ENCODE measurements at regions of chr10 and their contacts with region 1.

Region 1: DNA sequence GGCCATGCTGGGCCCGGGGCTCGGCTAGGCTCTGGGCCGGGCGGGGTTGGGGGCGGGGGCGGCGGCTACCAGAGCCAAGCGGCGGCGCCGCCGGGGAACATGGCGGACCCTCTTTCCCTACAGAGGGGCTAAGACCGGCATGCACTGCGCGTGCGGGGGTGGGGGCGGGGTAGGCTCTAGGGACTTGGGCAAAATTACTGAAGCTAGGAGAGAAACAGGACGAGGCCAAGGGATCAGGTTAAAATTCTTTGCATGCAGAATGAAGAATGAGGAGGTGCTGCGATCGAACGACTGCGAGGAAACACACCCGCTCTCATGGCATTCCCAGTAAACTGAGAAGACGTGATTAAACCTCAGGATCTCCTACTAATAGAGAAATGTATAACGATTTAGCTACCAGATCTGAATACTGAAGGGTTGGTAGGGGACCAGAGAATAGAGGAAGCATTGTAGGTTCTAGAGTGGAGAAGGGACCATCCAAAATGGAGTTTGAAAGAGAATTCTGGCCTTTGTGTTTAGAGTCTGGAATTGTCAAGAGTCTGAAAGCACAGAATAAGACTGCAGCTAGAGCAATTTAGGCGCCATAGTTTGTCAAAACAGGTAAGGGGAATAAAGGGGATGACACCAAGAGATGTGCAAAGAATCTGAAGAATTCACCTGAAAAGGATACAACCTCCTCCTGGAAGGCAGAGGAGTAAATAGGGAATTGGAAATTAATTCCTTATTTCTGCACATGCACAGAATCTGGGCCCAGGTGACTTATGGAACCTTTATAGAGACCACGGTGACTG is at the start of gene PPP3CB:
- DNase-seq: peak in 6 of 9 donors; percentile 77 to 93 (median 84)
- ATAC-seq: peak; percentile 89
- H3K4me3 ChIP-seq: peak within 1 kb of the TSS; percentile 99
- H3K4me3 Mint-ChIP-seq: peak within 1 kb of the TSS; percentile 84 to 99 (median 90)
- H3K27ac ChIP-seq: peak within 1 kb of the TSS; percentile 91
- H3K27ac Mint-ChIP-seq: peak within 1 kb of the TSS; percentile 83 to 99 (median 93)
- H3K4me1 ChIP-seq: peaks cover 19 to 38% of the 10 kb centered on the region in 2 donors
- H3K4me1 Mint-ChIP-seq: peaks cover 44 to 63% (median 55%) of the 10 kb centered on the region in 7 donors
- H3K27me3 ChIP-seq: no peaks in the 10 kb centered on the region
- H3K27me3 Mint-ChIP-seq: no peaks in the 10 kb centered on the region
- total RNA-seq, gene PPP3CB: 25.7 to 44.5 (median 41.4) TPM

Region 2: DNA sequence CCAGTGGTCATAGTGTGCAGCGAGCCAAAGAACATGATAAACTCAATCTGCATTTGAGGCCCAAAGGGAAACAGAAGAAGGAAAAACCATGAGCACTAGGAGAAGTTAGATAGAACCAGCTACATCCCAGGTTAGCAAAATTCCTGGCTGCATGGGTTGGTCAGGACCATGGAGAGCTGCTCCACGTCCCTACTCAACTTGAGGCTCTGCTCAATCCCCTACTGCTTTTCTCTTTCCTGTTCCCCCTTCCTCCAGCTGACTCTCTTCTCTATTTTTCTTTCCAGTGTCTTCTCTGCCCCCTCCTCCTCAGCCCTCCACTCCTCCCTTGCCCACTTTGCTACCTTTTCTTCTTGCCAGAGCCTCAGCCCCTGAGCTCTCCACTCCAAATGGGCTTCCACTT is 1700.8 kb before region 1 on chr10:
- CTCF ChIA-PET with region 1: no interaction called
- POLR2A ChIA-PET with region 1: no interaction called
- intact Hi-C with region 1: no loop called
- DNase-seq: no peak
- ATAC-seq: no peak
- H3K4me3 ChIP-seq: no peak overlapping the region
- H3K4me3 Mint-ChIP-seq: no peak overlapping the region
- H3K27ac ChIP-seq: no peak overlapping the region
- H3K27ac Mint-ChIP-seq: no peak overlapping the region
- H3K4me1 ChIP-seq: no peaks in the 10 kb centered on the region
- H3K4me1 Mint-ChIP-seq: peaks cover 12 to 23% (median 18%) of the 10 kb centered on the region in 7 donors
- H3K27me3 ChIP-seq: no peaks in the 10 kb centered on the region
- H3K27me3 Mint-ChIP-seq: peaks cover 0 to 3% (median 0%) of the 10 kb centered on the region in 5 donors

Region 3: DNA sequence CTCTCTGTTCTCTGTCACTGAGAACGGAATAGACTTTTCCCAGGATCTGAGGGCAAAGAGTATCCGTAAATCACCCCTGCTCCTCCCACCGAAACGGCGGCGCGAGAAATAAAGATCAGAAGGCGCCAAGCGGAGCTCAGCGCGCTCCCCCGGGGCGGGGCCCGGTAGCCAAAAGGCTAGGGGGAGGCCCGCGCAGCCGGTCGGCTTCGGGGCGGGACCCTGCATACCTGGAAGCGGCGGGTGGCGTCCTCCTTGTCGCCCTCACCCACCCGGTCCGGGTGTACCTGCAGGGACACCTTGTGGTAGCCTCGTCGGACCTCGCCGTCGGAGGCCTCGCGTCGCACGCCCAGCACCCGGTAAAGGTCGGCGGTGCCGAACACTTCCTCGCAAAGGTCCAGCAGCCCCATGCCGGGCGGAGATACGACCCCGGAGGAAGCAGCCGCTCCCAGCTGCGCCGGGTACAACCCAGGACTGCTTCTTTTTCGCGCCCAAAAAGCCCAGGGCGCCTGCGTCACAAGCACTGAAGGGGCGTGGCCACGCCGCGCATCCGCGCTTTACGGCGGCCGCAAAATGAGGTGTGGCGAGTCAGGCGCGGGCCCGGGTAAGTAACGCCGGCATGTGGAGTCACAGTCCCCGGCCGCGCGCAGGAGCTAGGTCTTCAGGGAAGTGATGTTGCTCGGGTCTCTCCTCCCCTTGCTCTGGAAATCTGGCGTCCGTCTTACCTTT is 249.1 kb before region 1 on chr10 and contains the start of gene DNAJC9:
- CTCF ChIA-PET with region 1: no interaction called
- POLR2A ChIA-PET with region 1: interaction called, 8 read pairs
- intact Hi-C with region 1: loop called (anchors 1 kb)
- DNase-seq: peak; percentile 93 to 98 (median 96)
- ATAC-seq: peak; percentile 95
- H3K4me3 ChIP-seq: peak within 1 kb of the TSS; percentile 71
- H3K4me3 Mint-ChIP-seq: peak within 1 kb of the TSS; percentile 92 to 100 (median 97)
- H3K27ac ChIP-seq: peak within 1 kb of the TSS; percentile 86
- H3K27ac Mint-ChIP-seq: peak within 1 kb of the TSS; percentile 91 to 98 (median 96)
- H3K4me1 ChIP-seq: peaks cover 27 to 37% of the 10 kb centered on the region in 2 donors
- H3K4me1 Mint-ChIP-seq: peaks cover 30 to 69% (median 55%) of the 10 kb centered on the region in 7 donors
- H3K27me3 ChIP-seq: no peaks in the 10 kb centered on the region
- H3K27me3 Mint-ChIP-seq: no peaks in the 10 kb centered on the region
- total RNA-seq, gene DNAJC9: 14.5 to 47.7 (median 26.8) TPM

Region 4: GRCh38 chr10:73306171-73306708 is 189.8 kb before region 1 on chr10:
- CTCF ChIA-PET with region 1: no interaction called
- POLR2A ChIA-PET with region 1: no interaction called
- intact Hi-C with region 1: no loop called
- DNase-seq: no peak
- ATAC-seq: no peak
- H3K4me3 ChIP-seq: no peak overlapping the region
- H3K4me3 Mint-ChIP-seq: no peak overlapping the region
- H3K27ac ChIP-seq: no peak overlapping the region
- H3K27ac Mint-ChIP-seq: no peak overlapping the region
- H3K4me1 ChIP-seq: no peaks in the 10 kb centered on the region
- H3K4me1 Mint-ChIP-seq: no peaks in the 10 kb centered on the region
- H3K27me3 ChIP-seq: no peaks in the 10 kb centered on the region
- H3K27me3 Mint-ChIP-seq: peaks cover 0 to 15% (median 0%) of the 10 kb centered on the region in 5 donors

Region 5: GRCh38 chr10:73480158-73480557 is 15.9 kb before region 1 on chr10:
- CTCF ChIA-PET with region 1: no interaction called
- POLR2A ChIA-PET with region 1: interaction called, 7 read pairs
- intact Hi-C with region 1: loop called in 1 of 2 experiments (anchors 2 kb)
- DNase-seq: no peak
- ATAC-seq: no peak
- H3K4me3 ChIP-seq: no peak overlapping the region
- H3K4me3 Mint-ChIP-seq: no peak overlapping the region
- H3K27ac ChIP-seq: no peak overlapping the region
- H3K27ac Mint-ChIP-seq: peak overlapping the region in 1 of 9 donors; percentile 18
- H3K4me1 ChIP-seq: peaks cover 0 to 15% of the 10 kb centered on the region in 2 donors
- H3K4me1 Mint-ChIP-seq: peaks cover 1 to 29% (median 17%) of the 10 kb centered on the region in 7 donors
- H3K27me3 ChIP-seq: no peaks in the 10 kb centered on the region
- H3K27me3 Mint-ChIP-seq: no peaks in the 10 kb centered on the region

Region 6: GRCh38 chr10:73743905-73744663 is 248.0 kb after region 1 on chr10 and contains the start of gene SEC24C:
- CTCF ChIA-PET with region 1: no interaction called
- POLR2A ChIA-PET with region 1: interaction called, 10 read pairs
- intact Hi-C with region 1: loop called (anchors 1 kb)
- DNase-seq: peak; percentile 87 to 97 (median 95)
- ATAC-seq: peak; percentile 93
- H3K4me3 ChIP-seq: peak within 1 kb of the TSS; percentile 93
- H3K4me3 Mint-ChIP-seq: peak within 1 kb of the TSS; percentile 92 to 100 (median 100)
- H3K27ac ChIP-seq: peak within 1 kb of the TSS; percentile 91
- H3K27ac Mint-ChIP-seq: peak within 1 kb of the TSS; percentile 98 to 100 (median 100)
- H3K4me1 ChIP-seq: peaks cover 22 to 27% of the 10 kb centered on the region in 2 donors
- H3K4me1 Mint-ChIP-seq: peaks cover 18 to 47% (median 39%) of the 10 kb centered on the region in 7 donors
- H3K27me3 ChIP-seq: no peaks in the 10 kb centered on the region
- H3K27me3 Mint-ChIP-seq: no peaks in the 10 kb centered on the region
- total RNA-seq, gene SEC24C: 68.7 to 122 (median 95.4) TPM

Region 7: GRCh38 chr10:73879296-73880173 is 383.5 kb after region 1 on chr10:
- CTCF ChIA-PET with region 1: no interaction called
- POLR2A ChIA-PET with region 1: interaction called, 4 read pairs
- intact Hi-C with region 1: loop called in 1 of 2 experiments (anchors 5 kb)
- DNase-seq: peak; percentile 91 to 98 (median 96)
- ATAC-seq: peak; percentile 97
- H3K4me3 ChIP-seq: no peak overlapping the region
- H3K4me3 Mint-ChIP-seq: peak overlapping the region in 5 of 10 donors; percentile 0 to 40 (median 1)
- H3K27ac ChIP-seq: peak overlapping the region; percentile 68
- H3K27ac Mint-ChIP-seq: peak overlapping the region; percentile 30 to 98 (median 89)
- H3K4me1 ChIP-seq: peaks cover 18 to 22% of the 10 kb centered on the region in 2 donors
- H3K4me1 Mint-ChIP-seq: peaks cover 14 to 51% (median 41%) of the 10 kb centered on the region in 7 donors
- H3K27me3 ChIP-seq: no peaks in the 10 kb centered on the region
- H3K27me3 Mint-ChIP-seq: peaks cover 0 to 5% (median 0%) of the 10 kb centered on the region in 5 donors

Region 8: DNA sequence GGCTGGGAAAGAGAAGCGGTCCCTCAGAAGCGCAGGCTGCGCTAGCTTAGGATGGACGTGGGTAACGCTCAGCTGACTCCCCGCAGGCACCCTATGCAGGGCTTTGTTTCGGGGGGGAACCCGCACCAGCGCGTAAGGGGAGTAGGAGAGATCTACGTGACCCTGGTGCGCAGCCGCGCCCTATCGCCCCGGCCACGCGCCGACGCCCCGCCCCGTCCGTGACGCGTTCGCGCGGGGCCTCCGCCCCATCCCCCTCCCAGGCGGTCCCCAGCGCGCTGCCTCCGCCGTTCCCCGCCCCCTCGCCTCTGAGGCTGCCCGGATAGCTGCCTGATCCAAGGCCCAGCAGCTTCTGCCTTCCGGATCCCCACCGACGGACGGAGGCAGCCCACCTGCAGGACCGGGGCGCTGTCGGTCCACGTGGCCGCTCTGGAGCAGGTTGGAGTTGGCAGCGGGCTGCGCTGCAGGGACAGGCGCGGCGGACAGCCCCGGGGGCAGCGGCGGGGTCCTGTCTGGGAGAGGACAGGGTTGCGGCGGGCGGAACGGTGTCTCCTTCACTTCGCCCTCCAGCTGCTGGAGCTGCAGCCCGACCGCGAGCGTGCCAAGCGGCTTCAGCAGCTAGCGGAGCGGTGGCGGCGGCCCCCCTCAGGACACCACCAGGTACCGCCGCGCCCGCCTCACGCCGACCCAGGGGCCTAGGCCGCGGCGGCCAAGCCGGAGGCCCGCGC is 1714.4 kb after region 1 on chr10 and contains the start of gene VDAC2:
- CTCF ChIA-PET with region 1: no interaction called
- POLR2A ChIA-PET with region 1: no interaction called
- intact Hi-C with region 1: loop called in 1 of 2 experiments (anchors 2 kb)
- DNase-seq: peak; percentile 92 to 100 (median 98)
- ATAC-seq: peak; percentile 92
- H3K4me3 ChIP-seq: peak within 1 kb of the TSS; percentile 81
- H3K4me3 Mint-ChIP-seq: peak within 1 kb of the TSS; percentile 87 to 100 (median 98)
- H3K27ac ChIP-seq: peak within 1 kb of the TSS; percentile 96
- H3K27ac Mint-ChIP-seq: peak within 1 kb of the TSS; percentile 99 to 100 (median 100)
- H3K4me1 ChIP-seq: peaks cover 15 to 21% of the 10 kb centered on the region in 2 donors
- H3K4me1 Mint-ChIP-seq: peaks cover 21 to 44% (median 29%) of the 10 kb centered on the region in 7 donors
- H3K27me3 ChIP-seq: no peaks in the 10 kb centered on the region
- H3K27me3 Mint-ChIP-seq: no peaks in the 10 kb centered on the region
- total RNA-seq, gene VDAC2: 82.8 to 138 (median 121) TPM